ENCODE measurements at regions of chr4 and their contacts with region 1.

Region 1: DNA sequence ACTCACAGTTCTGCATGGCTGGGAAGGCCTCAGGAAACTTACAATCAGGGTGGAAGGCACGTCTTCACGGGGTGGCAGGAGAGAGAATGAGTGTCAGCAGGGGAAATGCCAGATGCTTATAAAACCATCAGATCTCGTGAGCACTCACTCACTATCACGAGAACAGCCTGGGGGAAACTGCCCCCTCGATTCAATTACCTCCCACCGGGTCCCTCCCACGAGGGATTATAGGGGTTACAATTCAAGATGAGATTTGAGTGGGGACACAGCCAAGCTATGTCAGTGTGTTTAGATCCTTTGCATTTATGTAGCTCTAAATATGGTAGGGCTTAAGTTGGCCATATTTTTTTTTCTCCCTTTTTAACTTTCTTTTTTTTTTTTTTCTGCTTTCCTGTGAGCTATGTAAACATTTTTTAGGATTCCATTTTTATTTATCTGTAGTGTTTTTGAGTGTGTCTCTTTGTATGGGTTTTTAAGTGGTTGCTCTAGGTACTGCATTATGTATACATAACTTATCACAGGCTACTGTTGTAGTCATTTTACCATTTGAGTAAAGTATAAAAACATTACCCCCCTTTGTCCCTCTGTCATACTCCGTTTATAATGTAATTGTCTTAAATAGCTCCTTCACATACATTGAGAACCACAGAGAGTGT is 79.0 kb downstream of the ADRA2C start:
- DNase-seq: no peak
- ATAC-seq: no peak
- H3K4me3 ChIP-seq: no peak overlapping the region
- H3K27ac ChIP-seq: no peak overlapping the region
- H3K4me1 ChIP-seq: no peaks in the 10 kb centered on the region
- H3K27me3 ChIP-seq: no peaks in the 10 kb centered on the region

Region 2: DNA sequence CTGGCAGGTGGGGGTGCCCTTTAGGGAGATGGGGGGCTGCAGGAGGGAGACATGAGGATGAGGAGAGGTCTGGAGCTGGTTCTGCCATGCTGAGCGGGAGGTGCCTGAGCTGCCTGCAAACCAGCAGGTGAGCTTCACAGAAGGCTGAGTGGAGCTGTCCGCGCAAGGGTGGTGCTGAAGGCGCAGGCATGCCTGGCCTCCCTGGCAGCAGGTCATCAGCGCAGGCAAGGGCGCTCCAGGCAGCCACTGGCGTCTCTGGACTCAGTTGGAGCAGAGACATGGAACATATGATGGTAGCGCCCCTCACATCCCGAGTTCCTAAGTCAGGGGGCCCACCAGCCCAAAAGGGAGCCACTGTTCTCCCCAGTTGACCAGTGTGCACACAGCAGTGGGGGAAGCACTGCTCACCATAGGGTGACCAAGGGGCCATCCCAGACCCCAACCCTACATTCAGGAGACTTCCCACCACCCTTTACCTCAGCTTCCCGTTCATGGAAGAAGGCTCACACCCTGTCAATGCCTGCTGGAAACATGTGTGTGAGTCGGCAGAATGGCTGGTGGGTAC is 53.2 kb before region 1 on chr4:
- intact Hi-C with region 1: loop called in 1 of 2 experiments (anchors 10 kb)
- DNase-seq: peak; percentile 48 to 85
- ATAC-seq: no peak
- H3K4me3 ChIP-seq: no peak overlapping the region
- H3K27ac ChIP-seq: no peak overlapping the region
- H3K4me1 ChIP-seq: no peaks in the 10 kb centered on the region
- H3K27me3 ChIP-seq: no peaks in the 10 kb centered on the region